ENCODE measurements at regions of chr22 and their contacts with region 1.

Region 1: DNA sequence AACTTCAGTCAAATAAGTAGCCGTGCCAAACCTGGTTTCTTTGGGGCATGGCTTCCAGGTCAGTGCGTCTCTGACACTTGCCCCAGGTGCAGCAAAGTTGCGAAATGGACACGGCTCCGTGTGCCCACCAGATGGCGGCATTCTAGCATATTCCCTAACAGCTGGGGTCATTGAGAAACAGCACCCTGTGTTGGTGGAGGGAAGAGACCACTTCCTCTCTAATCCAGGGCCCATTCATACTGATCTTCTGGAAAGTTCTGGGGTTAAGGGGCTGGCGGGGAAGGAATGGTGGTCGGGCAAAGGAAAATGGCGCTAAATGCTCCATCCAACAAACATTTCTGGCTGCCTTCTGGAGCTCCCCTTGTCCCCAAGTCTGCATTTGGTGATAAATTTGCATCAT is 141.2 kb upstream of the TIMP3 start:
- DNase-seq: no peak
- H3K4me3 ChIP-seq: no peak overlapping the region
- H3K27ac ChIP-seq: no peak overlapping the region
- H3K4me1 ChIP-seq: no peaks in the 10 kb centered on the region
- H3K27me3 ChIP-seq: no peaks in the 10 kb centered on the region
- CTCF ChIP-seq: peak; percentile 28 to 32
- POLR2A ChIP-seq: no peak

Region 2: GRCh38 chr22:32700191-32700882 is 40.0 kb after region 1 on chr22:
- CTCF ChIA-PET with region 1: no interaction called
- POLR2A ChIA-PET with region 1: no interaction called
- dilution Hi-C with region 1: no loop called
- intact Hi-C with region 1: loop called (anchors 1 kb)
- DNase-seq: no peak
- H3K4me3 ChIP-seq: no peak overlapping the region
- H3K27ac ChIP-seq: no peak overlapping the region
- H3K4me1 ChIP-seq: no peaks in the 10 kb centered on the region
- H3K27me3 ChIP-seq: no peaks in the 10 kb centered on the region
- CTCF ChIP-seq: no peak
- POLR2A ChIP-seq: no peak

Region 3: GRCh38 chr22:32775957-32776356 is 115.7 kb after region 1 on chr22:
- CTCF ChIA-PET with region 1: no interaction called
- POLR2A ChIA-PET with region 1: no interaction called
- dilution Hi-C with region 1: no loop called
- intact Hi-C with region 1: loop called (anchors 5 kb)
- DNase-seq: no peak
- H3K4me3 ChIP-seq: no peak overlapping the region
- H3K27ac ChIP-seq: no peak overlapping the region
- H3K4me1 ChIP-seq: no peaks in the 10 kb centered on the region
- H3K27me3 ChIP-seq: no peaks in the 10 kb centered on the region
- CTCF ChIP-seq: no peak
- POLR2A ChIP-seq: no peak

Region 4: GRCh38 chr22:32796865-32797573 is 136.7 kb after region 1 on chr22:
- CTCF ChIA-PET with region 1: interaction called, 81 read pairs
- POLR2A ChIA-PET with region 1: no interaction called
- dilution Hi-C with region 1: no loop called
- intact Hi-C with region 1: loop called (anchors 1 kb)
- DNase-seq: no peak
- H3K4me3 ChIP-seq: no peak overlapping the region
- H3K27ac ChIP-seq: no peak overlapping the region
- H3K4me1 ChIP-seq: no peaks in the 10 kb centered on the region
- H3K27me3 ChIP-seq: peaks cover 6 to 7% of the 10 kb centered on the region in 2 experiments
- CTCF ChIP-seq: peak; percentile 45 to 64
- POLR2A ChIP-seq: no peak

Region 5: GRCh38 chr22:32823024-32823730 is 162.9 kb after region 1 on chr22:
- CTCF ChIA-PET with region 1: no interaction called
- POLR2A ChIA-PET with region 1: no interaction called
- dilution Hi-C with region 1: no loop called
- intact Hi-C with region 1: loop called (anchors 1 kb)
- DNase-seq: no peak
- H3K4me3 ChIP-seq: no peak overlapping the region
- H3K27ac ChIP-seq: no peak overlapping the region
- H3K4me1 ChIP-seq: no peaks in the 10 kb centered on the region
- H3K27me3 ChIP-seq: no peaks in the 10 kb centered on the region
- CTCF ChIP-seq: no peak
- POLR2A ChIP-seq: no peak

Region 6: GRCh38 chr22:32985899-32986765 is 325.8 kb after region 1 on chr22:
- CTCF ChIA-PET with region 1: interaction called, 7 read pairs
- POLR2A ChIA-PET with region 1: no interaction called
- dilution Hi-C with region 1: no loop called
- intact Hi-C with region 1: loop called (anchors 1 kb)
- DNase-seq: peak; percentile 8
- H3K4me3 ChIP-seq: no peak overlapping the region
- H3K27ac ChIP-seq: no peak overlapping the region
- H3K4me1 ChIP-seq: no peaks in the 10 kb centered on the region
- H3K27me3 ChIP-seq: no peaks in the 10 kb centered on the region
- CTCF ChIP-seq: peak; percentile 47 to 54
- POLR2A ChIP-seq: no peak

Region 7: GRCh38 chr22:33000342-33001280 is 340.3 kb after region 1 on chr22:
- CTCF ChIA-PET with region 1: interaction called, 4 read pairs
- POLR2A ChIA-PET with region 1: no interaction called
- dilution Hi-C with region 1: no loop called
- intact Hi-C with region 1: loop called (anchors 1 kb)
- DNase-seq: peak; percentile 2
- H3K4me3 ChIP-seq: no peak overlapping the region
- H3K27ac ChIP-seq: no peak overlapping the region
- H3K4me1 ChIP-seq: no peaks in the 10 kb centered on the region
- H3K27me3 ChIP-seq: no peaks in the 10 kb centered on the region
- CTCF ChIP-seq: peak; percentile 54 to 79
- POLR2A ChIP-seq: no peak